ENCODE measurements at regions of chr10 and their contacts with region 1.

Region 1: GRCh38 chr10:60778214-60779029 is at the start of gene CDK1:
- DNase-seq: peak; percentile 97
- total RNA-seq, gene CDK1: 0.35 TPM

Region 2: GRCh38 chr10:60652628-60653027 is 125.8 kb before region 1 on chr10:
- intact Hi-C with region 1: no loop called
- DNase-seq: no peak

Region 3: GRCh38 chr10:60827791-60828488 is 49.5 kb after region 1 on chr10:
- intact Hi-C with region 1: loop called (anchors 5 kb)
- DNase-seq: no peak